SK-N-SH (cell line): ENCODE measurements at regions of chr7 and their contacts with region 1.

Region 1: DNA sequence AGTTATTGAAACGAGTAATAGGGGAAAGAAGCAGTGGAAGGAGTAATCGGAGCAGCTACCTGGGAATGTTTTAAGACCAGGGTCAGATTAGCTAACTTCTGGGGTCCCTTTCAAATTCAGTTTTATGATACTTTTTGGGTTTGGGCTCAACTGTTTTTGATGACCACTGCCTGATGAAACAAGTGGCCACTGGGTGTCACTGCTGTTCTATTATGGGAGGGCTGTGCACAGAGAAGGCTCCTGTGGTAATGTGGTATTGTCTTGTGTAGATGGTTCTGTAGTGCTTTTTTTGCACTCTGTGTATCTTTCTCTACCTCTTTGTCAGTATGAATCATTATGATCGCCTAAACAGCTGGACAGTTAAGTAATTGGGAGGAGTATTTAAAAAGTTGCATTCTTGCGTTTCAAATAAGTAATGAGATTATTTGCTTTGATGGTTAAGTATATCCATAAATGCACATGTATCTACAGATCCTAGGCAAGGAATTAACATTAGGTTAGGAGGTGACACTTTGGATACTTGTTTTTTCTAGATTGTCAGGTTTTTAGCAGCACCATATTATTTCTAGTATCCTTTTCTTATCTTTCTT is 128.4 kb downstream of the ABCA13 start:
- DNase-seq: peak; percentile 68
- H3K4me3 ChIP-seq: no peak overlapping the region
- H3K27ac ChIP-seq: no peak overlapping the region
- H3K4me1 ChIP-seq: no peaks in the 10 kb centered on the region
- H3K27me3 ChIP-seq: peaks cover 24% of the 10 kb centered on the region; the same call in 1 of the 2 replicates
- CTCF ChIP-seq: peak; percentile 92
- EP300 ChIP-seq: no peak
- RAD21 ChIP-seq: peak; percentile 89

Region 2: DNA sequence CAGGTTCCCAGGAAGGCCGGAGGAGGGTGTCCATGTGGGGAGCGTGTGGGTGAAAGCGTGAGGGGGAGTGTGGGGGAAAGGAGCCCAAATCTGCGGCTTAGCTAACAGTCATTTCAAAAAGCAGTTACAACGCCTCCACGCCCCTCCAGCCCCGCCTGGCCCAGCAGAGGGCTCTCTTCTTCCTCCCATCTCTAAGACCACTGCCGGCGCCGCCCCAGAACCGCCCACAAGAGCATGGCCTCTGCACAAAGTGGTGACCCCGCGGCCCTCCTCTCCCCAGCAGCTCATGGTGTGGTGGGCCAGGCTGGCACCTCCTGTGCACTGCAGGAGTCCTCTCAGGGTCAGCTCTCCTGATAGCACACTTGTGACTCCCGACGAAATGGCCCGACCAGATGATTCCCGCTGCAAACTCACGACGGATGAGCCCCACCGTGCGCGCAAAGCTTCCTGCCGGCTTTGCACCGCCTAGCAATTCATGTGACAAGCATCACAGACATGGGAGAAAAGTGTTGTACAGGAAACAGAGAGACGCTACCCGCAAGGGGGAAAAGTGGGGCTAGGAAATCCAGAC is 307.8 kb before region 1 on chr7:
- CTCF ChIA-PET with region 1: no interaction called
- POLR2A ChIA-PET with region 1: no interaction called
- DNase-seq: peak; percentile 59
- H3K4me3 ChIP-seq: no peak overlapping the region
- H3K27ac ChIP-seq: no peak overlapping the region
- H3K4me1 ChIP-seq: no peaks in the 10 kb centered on the region; a peak in 1 of 4 replicates
- H3K27me3 ChIP-seq: no peaks in the 10 kb centered on the region; the same call in 1 of the 2 replicates
- CTCF ChIP-seq: peak; percentile 51
- EP300 ChIP-seq: no peak
- RAD21 ChIP-seq: peak; percentile 49

Region 3: DNA sequence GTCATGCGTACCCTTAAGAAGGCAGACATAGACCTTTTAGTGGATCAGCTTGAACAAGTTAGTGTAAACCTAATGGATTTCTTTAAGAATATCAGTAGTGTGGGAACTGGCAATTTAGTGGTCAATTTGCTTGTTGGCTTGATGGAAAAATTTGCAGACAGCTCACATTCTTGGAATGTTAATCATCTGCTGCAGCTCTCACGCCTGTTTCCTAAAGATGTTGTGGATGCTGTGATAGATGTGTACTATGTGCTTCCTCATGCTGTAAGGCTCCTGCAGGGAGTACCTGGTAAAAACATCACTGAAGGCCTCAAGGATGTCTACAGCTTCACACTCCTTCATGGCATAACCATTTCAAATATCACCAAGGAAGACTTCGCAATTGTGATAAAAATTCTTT is 25.0 kb before region 1 on chr7:
- CTCF ChIA-PET with region 1: interaction called, 10 read pairs
- POLR2A ChIA-PET with region 1: no interaction called
- DNase-seq: no peak
- H3K4me3 ChIP-seq: no peak overlapping the region
- H3K27ac ChIP-seq: no peak overlapping the region
- H3K4me1 ChIP-seq: no peaks in the 10 kb centered on the region
- H3K27me3 ChIP-seq: peaks cover 6% of the 10 kb centered on the region; the same call in 1 of the 2 replicates
- CTCF ChIP-seq: no peak
- EP300 ChIP-seq: no peak
- RAD21 ChIP-seq: no peak

Region 4: GRCh38 chr7:48312151-48312550 is 12.5 kb after region 1 on chr7:
- CTCF ChIA-PET with region 1: interaction called, 35 read pairs
- POLR2A ChIA-PET with region 1: no interaction called
- DNase-seq: no peak
- H3K4me3 ChIP-seq: no peak overlapping the region
- H3K27ac ChIP-seq: no peak overlapping the region
- H3K4me1 ChIP-seq: no peaks in the 10 kb centered on the region
- H3K27me3 ChIP-seq: peaks cover 30% of the 10 kb centered on the region
- CTCF ChIP-seq: no peak
- EP300 ChIP-seq: no peak
- RAD21 ChIP-seq: no peak

Region 5: GRCh38 chr7:48337012-48337621 is 37.4 kb after region 1 on chr7:
- CTCF ChIA-PET with region 1: interaction called, 19 read pairs
- POLR2A ChIA-PET with region 1: no interaction called
- DNase-seq: peak; percentile 14
- H3K4me3 ChIP-seq: no peak overlapping the region
- H3K27ac ChIP-seq: no peak overlapping the region
- H3K4me1 ChIP-seq: no peaks in the 10 kb centered on the region
- H3K27me3 ChIP-seq: no peaks in the 10 kb centered on the region
- CTCF ChIP-seq: peak; percentile 61
- EP300 ChIP-seq: no peak
- RAD21 ChIP-seq: no peak; the same call in 1 of the 2 replicates

Region 6: DNA sequence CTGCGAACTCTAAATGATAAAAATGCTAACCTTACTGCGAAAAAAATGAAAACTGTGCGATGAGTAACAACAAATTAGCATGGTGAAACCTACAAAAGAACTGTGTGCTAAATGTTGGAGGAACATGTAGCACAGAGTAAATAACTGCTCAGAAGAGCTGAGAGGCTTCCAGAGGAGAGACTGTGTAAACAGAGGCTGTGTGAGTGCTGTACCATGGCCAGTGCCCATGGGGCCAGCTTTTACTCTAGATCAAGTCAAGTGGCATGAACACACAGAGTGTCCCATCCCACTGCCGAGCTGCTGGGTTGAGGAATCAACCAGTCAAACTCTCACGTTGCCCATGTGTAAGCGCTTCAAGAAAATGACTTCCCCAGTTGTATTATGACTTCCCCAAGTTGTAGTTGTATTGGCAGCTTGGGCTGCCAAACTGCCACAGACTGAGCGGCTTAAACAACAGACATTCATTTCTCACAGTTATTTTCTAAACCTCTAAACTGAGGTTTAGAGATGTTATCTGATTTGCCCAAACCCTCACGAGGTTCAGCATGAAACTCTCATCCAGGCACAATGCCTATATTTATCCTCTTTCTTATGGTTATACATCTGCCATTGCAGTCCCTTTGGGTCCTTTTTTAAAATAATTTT is 142.3 kb after region 1 on chr7:
- CTCF ChIA-PET with region 1: no interaction called
- POLR2A ChIA-PET with region 1: no interaction called
- DNase-seq: no peak
- H3K4me3 ChIP-seq: no peak overlapping the region
- H3K27ac ChIP-seq: no peak overlapping the region
- H3K4me1 ChIP-seq: no peaks in the 10 kb centered on the region; a peak in 1 of 4 replicates
- H3K27me3 ChIP-seq: no peaks in the 10 kb centered on the region; the same call in 1 of the 2 replicates
- CTCF ChIP-seq: no peak
- EP300 ChIP-seq: no peak
- RAD21 ChIP-seq: no peak

Region 7: GRCh38 chr7:48643431-48644013 is 343.8 kb after region 1 on chr7:
- CTCF ChIA-PET with region 1: no interaction called
- POLR2A ChIA-PET with region 1: no interaction called
- DNase-seq: no peak
- H3K4me3 ChIP-seq: no peak overlapping the region
- H3K27ac ChIP-seq: no peak overlapping the region
- H3K4me1 ChIP-seq: no peaks in the 10 kb centered on the region
- H3K27me3 ChIP-seq: no peaks in the 10 kb centered on the region
- CTCF ChIP-seq: no peak
- EP300 ChIP-seq: no peak
- RAD21 ChIP-seq: no peak

Region 8: DNA sequence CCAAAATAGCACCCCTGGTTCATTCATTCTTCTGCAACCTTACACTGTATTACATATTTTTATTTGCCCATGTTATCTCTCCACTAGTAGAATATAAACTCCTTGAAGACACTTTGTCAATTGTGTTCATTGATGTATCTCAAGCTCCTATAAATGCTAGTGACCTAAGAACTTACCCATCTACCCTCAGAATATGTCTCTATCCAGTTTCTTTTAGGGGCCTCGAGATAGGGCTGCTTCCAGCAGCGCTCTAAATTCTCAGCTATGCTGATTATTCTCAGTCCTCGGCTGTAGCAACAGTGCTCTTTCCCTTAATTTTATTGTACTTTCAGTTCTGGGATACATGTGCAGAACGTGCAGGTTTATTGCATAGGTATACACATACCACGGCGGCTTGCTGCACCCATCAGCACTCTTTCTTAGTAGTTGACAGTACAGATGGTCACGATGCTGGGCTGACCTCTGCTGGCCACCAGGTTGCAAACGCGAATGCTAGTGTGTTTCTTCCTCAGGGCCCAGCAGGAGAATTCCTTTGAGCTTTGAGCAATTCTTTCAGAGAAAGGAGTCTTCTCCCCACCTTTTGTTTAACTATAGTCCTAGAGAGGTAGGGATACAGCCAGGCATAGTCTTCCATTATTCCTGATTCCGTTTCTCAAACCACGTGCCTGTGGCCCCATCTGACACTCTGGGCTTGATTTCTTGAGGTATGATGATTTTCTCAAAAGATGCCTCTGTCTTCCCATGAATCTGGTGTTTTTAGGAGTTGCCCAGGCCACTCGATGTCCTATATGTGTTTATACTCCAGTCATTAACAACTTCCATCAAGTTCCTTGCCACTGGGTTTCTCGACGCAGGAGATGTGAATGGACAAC is 575.6 kb after region 1 on chr7:
- CTCF ChIA-PET with region 1: interaction called, 12 read pairs
- POLR2A ChIA-PET with region 1: no interaction called
- DNase-seq: peak; percentile 11
- H3K4me3 ChIP-seq: no peak overlapping the region
- H3K27ac ChIP-seq: no peak overlapping the region
- H3K4me1 ChIP-seq: no peaks in the 10 kb centered on the region
- H3K27me3 ChIP-seq: no peaks in the 10 kb centered on the region
- CTCF ChIP-seq: peak; percentile 69
- EP300 ChIP-seq: no peak
- RAD21 ChIP-seq: peak; percentile 62